HepG2 (cell line): ENCODE measurements at regions of chr16 and their contacts with region 1.

Region 1: GRCh38 chr16:21300309-21301167 is 22.4 kb upstream of the CRYM start:
- DNase-seq: peak; percentile 100
- ATAC-seq: peak; percentile 89
- H3K4me3 ChIP-seq: peak overlapping the region; percentile 56 to 86 (median 63)
- H3K27ac ChIP-seq: peak overlapping the region; percentile 36
- H3K4me1 ChIP-seq: peaks cover 32% of the 10 kb centered on the region
- H3K27me3 ChIP-seq: no peaks in the 10 kb centered on the region
- CTCF ChIP-seq: peak; percentile 100
- EP300 ChIP-seq: peak in 1 of 2 experiments; percentile 77; a peak in 2 of 4 replicates
- POLR2A ChIP-seq: peak; percentile 34 to 40; a peak in 1 of 4 replicates
- RAD21 ChIP-seq: peak; percentile 99

Region 2: DNA sequence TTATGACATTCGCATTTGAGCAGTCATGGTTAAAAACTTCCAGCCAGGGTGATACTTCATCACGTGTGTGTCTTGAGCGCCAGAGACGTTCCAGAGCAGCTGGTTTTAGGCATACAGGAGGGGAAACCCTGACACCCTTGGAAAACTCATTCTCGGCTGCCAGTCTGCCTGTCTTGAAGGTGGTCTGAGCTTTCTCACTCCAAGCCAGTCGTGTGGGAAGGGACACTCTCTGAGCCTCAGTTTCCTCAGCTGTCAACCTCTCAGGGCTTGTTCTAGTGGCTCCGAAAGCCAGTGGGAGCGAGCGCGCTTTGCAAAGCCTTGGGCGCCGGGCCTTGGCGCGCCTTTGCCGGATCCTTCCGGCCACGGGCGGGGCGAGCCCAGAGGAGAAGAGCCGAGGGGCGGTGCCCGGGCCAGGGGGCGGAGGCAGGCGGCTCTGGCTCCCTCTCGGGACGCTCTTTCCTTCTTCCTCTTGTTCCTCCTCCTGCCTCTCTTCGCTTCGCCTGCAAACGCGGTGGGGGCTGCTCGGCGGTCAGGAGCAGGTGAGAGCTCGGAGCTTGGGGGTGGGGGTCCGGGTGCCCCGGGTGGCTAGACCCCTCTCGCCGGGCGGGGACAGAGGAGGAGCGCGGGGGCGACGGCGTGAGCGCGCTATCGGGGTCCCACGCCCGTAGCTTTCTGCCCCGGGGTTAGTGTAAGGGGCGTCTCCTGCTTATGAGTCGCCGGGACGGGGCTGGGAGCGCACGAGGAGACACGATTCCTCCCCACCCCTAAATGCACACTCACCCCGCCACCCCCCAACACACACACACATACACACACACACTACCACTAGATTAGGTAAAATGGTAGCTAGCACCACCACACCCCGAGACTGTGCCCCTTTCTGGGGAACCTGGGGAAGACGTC is 142.1 kb before region 1 on chr16 and contains the start of gene LDAF1:
- CTCF ChIA-PET with region 1: interaction called, 60 read pairs
- POLR2A ChIA-PET with region 1: interaction called, 19 read pairs
- in situ Hi-C with region 1: loop called (anchors 5 kb)
- intact Hi-C with region 1: loop called (anchors 1 kb)
- DNase-seq: peak; percentile 33
- ATAC-seq: peak; percentile 93
- H3K4me3 ChIP-seq: peak within 1 kb of the TSS; percentile 79 to 88 (median 80)
- H3K27ac ChIP-seq: no peak within 1 kb of the TSS
- H3K4me1 ChIP-seq: peaks cover 33% of the 10 kb centered on the region
- H3K27me3 ChIP-seq: peaks cover 2 to 18% of the 10 kb centered on the region in 2 experiments; a peak in 2 of 5 replicates
- CTCF ChIP-seq: peak; percentile 40; the same call in 1 of the 2 replicates
- EP300 ChIP-seq: peak in 1 of 2 experiments; percentile 32; a peak in 2 of 4 replicates
- POLR2A ChIP-seq: no peak
- RAD21 ChIP-seq: peak; percentile 48; the same call in 1 of the 2 replicates
- total RNA-seq, gene LDAF1: 6.3 and 8.3 TPM in 2 replicates

Region 3: DNA sequence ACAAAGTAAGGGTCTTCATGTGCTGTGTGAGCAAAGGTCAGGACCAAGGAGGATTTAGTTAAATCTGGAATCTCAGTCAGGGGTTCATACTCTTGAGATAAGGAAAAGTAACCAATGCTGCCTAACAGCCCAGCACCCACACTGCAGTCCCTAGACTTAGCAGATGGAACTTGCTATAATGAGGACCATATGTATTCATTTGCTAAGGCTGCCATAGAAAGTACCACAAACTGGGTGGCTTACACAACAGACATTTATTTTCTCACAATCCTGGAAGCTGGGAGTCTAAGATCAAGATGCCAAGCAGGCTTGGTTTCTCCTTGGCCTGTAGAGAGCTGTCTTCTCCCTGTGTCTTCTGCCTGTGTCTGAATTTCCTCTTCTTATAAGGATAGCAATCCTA is 109.9 kb before region 1 on chr16:
- CTCF ChIA-PET with region 1: interaction called, 34 read pairs
- POLR2A ChIA-PET with region 1: interaction called, 52 read pairs
- in situ Hi-C with region 1: loop called (anchors 5 kb)
- intact Hi-C with region 1: loop called (anchors 1 kb)
- DNase-seq: no peak
- ATAC-seq: no peak
- H3K4me3 ChIP-seq: no peak overlapping the region
- H3K27ac ChIP-seq: no peak overlapping the region
- H3K4me1 ChIP-seq: peaks cover 30% of the 10 kb centered on the region
- H3K27me3 ChIP-seq: peaks cover 0 to 22% of the 10 kb centered on the region in 2 experiments; a peak in 2 of 5 replicates
- CTCF ChIP-seq: no peak
- EP300 ChIP-seq: no peak
- POLR2A ChIP-seq: no peak
- RAD21 ChIP-seq: no peak

Region 4: GRCh38 chr16:21277927-21278706 is 22.4 kb before region 1 on chr16 and contains the start of gene CRYM:
- CTCF ChIA-PET with region 1: interaction called, 4 read pairs
- POLR2A ChIA-PET with region 1: interaction called, 9 read pairs
- in situ Hi-C with region 1: no loop called
- intact Hi-C with region 1: loop called (anchors 1 kb)
- DNase-seq: peak; percentile 35
- ATAC-seq: peak; percentile 94
- H3K4me3 ChIP-seq: peak within 1 kb of the TSS; percentile 51 to 79 (median 62)
- H3K27ac ChIP-seq: no peak within 1 kb of the TSS
- H3K4me1 ChIP-seq: peaks cover 27% of the 10 kb centered on the region
- H3K27me3 ChIP-seq: peaks cover 0 to 21% of the 10 kb centered on the region in 2 experiments; a peak in 2 of 5 replicates
- CTCF ChIP-seq: peak; percentile 99
- EP300 ChIP-seq: no peak
- POLR2A ChIP-seq: no peak
- RAD21 ChIP-seq: peak; percentile 94
- total RNA-seq, gene CRYM: 1.9 and 2.4 TPM in 2 replicates

Region 5: GRCh38 chr16:21321736-21322135 is 21.2 kb after region 1 on chr16:
- CTCF ChIA-PET with region 1: no interaction called
- POLR2A ChIA-PET with region 1: no interaction called
- in situ Hi-C with region 1: no loop called
- intact Hi-C with region 1: no loop called
- DNase-seq: no peak
- ATAC-seq: no peak
- H3K4me3 ChIP-seq: no peak overlapping the region
- H3K27ac ChIP-seq: no peak overlapping the region
- H3K4me1 ChIP-seq: peaks cover 17% of the 10 kb centered on the region
- H3K27me3 ChIP-seq: no peaks in the 10 kb centered on the region
- CTCF ChIP-seq: no peak
- EP300 ChIP-seq: no peak
- POLR2A ChIP-seq: no peak
- RAD21 ChIP-seq: no peak

Region 6: DNA sequence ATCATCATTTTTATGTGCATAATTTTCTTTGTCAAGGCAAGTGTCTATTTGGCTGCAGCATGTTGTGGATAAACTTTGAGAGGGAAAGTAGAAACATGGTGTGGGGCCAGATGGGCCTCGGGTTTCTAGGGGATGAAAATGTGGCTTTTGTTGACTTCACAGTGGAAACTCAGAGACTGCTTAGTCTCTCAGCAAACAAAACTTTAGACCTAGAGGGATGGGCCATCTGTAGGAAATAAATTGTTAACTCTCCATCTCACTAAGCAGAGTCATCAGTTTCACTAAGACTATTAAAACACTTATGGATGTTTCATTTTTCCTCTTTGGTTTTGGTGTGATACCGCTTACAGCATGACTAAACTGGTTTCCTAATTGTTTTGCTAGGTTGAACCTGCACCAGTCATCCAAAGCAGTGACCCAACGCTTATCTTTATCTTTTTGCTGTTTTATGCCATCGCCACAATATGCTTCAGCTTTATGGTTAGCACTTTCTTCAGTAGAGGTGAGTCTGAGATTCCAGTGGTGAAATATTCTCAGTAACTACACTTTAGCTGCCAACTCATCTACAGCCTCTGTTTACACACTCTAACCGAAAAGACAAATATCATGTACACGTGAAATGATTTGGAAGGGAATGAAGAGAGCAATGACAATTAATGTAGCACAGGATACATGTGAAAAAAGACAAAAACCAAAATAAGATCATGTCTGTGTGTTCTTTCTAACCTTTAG is 38.2 kb after region 1 on chr16:
- CTCF ChIA-PET with region 1: no interaction called
- POLR2A ChIA-PET with region 1: interaction called, 10 read pairs
- in situ Hi-C with region 1: no loop called
- intact Hi-C with region 1: no loop called
- DNase-seq: peak; percentile 87
- ATAC-seq: peak; percentile 94
- H3K4me3 ChIP-seq: peak overlapping the region in 2 of 3 experiments; percentile 8 to 29; a peak in 2 of 6 replicates
- H3K27ac ChIP-seq: peak overlapping the region; percentile 56
- H3K4me1 ChIP-seq: peaks cover 64% of the 10 kb centered on the region
- H3K27me3 ChIP-seq: no peaks in the 10 kb centered on the region
- CTCF ChIP-seq: no peak
- EP300 ChIP-seq: peak in 1 of 2 experiments; percentile 59; a peak in 1 of 4 replicates
- POLR2A ChIP-seq: no peak
- RAD21 ChIP-seq: peak; percentile 37; the same call in 1 of the 2 replicates